AG04450 (cell line): ENCODE measurements at regions of chr5 and their contacts with region 1.

Region 1: GRCh38 chr5:173293817-173294672 is 34.2 kb downstream of the STC2 start:
- DNase-seq: peak; percentile 55
- H3K4me3 ChIP-seq: peak overlapping the region; percentile 15; the same call in 1 of the 2 replicates
- H3K27ac ChIP-seq: no peak overlapping the region
- H3K27me3 ChIP-seq: peaks cover 4% of the 10 kb centered on the region
- CTCF ChIP-seq: peak; percentile 88

Region 2: GRCh38 chr5:173315495-173316350 is 21.7 kb after region 1 on chr5:
- CTCF ChIA-PET with region 1: interaction called, 24 read pairs
- POLR2A ChIA-PET with region 1: interaction called, 5 read pairs
- DNase-seq: peak; percentile 67
- H3K4me3 ChIP-seq: peak overlapping the region; percentile 1; the same call in 1 of the 2 replicates
- H3K27ac ChIP-seq: peak overlapping the region; percentile 86
- H3K27me3 ChIP-seq: no peaks in the 10 kb centered on the region
- CTCF ChIP-seq: no peak

Region 3: DNA sequence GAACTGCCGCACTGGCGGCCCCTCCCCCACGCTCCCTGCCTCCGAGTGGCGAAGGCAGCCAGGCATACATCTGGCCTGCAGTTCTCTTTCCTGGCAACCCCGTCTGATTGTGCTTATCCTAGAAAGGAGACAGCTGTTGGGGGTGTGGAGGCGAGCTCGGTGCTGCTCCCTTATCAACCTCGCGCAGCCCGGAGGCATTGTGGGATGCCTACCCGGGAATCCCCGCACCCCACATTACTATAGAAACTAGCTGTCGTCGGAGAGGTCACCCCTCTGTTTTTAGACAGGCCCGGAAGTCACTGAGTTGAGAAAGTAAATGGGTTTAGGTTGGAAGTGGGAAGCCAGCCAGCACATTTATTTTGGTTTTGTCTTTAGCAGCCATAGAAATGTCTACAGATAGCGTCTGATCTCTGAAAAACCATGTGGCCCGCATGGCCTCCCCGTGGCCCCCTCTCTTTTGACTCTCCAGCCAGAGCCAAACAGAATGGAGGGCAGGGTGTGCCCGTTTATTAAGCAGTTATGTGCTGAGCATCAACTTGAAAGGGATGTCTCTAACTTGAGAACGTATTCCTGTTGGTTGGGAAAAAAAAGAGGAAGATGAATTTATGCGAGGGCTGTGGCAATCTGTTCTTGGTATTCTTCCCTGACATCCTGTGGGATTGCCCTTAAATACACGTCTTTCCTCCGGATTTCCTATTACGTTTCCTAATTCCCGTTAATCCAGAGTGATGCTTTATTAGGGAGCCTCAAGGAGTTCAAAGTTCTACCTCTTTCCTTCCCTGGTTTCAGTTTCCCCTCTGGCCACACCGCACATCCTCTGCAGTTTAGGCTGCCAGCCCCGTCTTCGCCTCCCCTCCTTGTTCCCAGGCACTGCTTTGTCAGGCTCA is 30.3 kb after region 1 on chr5:
- CTCF ChIA-PET with region 1: interaction called, 121 read pairs
- POLR2A ChIA-PET with region 1: interaction called, 7 read pairs
- DNase-seq: peak; percentile 90
- H3K4me3 ChIP-seq: peak overlapping the region; percentile 96
- H3K27ac ChIP-seq: peak overlapping the region; percentile 73
- H3K27me3 ChIP-seq: no peaks in the 10 kb centered on the region
- CTCF ChIP-seq: no peak

Region 4: GRCh38 chr5:173331956-173332479 is 38.0 kb after region 1 on chr5:
- CTCF ChIA-PET with region 1: interaction called, 121 read pairs
- POLR2A ChIA-PET with region 1: interaction called, 16 read pairs
- DNase-seq: no peak
- H3K4me3 ChIP-seq: no peak overlapping the region
- H3K27ac ChIP-seq: no peak overlapping the region
- H3K27me3 ChIP-seq: no peaks in the 10 kb centered on the region
- CTCF ChIP-seq: peak; percentile 90

Region 5: GRCh38 chr5:173581408-173582215 is 287.6 kb after region 1 on chr5:
- CTCF ChIA-PET with region 1: interaction called, 16 read pairs
- POLR2A ChIA-PET with region 1: no interaction called
- DNase-seq: no peak
- H3K4me3 ChIP-seq: no peak overlapping the region
- H3K27ac ChIP-seq: no peak overlapping the region
- H3K27me3 ChIP-seq: no peaks in the 10 kb centered on the region
- CTCF ChIP-seq: peak; percentile 82